B cell (primary cell): ENCODE measurements at regions of chr19 and their contacts with region 1.

Region 1: DNA sequence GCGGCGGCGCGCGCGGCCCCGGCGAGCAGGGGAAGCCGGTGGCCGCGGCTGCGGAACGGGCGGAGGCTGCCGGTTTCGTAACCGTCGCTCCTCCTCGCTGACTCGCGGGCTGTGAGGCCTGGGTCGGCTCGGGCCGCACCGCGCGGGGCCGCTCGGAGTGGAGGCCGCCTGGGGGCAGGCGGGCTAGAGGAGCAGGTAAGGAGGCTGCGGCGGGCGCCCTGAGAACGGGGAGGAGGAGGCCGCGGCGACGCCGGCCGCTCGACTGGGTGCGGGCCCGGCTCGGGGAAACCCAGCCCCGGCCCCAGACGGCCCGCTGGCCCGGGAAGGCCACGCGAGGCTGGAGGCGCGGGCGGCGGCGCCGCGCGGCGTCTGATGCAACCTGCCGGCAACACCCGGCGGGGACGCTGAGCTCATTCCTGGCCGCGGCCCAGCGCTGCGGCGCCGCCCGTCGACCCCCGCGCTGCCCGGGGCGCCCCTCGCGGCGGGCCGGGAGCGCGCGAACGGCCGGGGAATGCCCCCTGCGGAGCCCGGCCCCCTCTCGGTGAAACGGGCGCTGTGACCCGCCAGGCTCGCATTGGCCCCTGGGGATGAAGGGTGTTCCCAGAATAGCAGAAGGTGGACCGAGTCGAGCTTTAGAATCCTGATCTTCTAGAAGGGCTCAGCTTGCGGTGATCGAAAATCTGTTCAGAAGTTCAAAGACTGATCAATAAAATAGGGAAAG is at the start of gene CEBPG:
- DNase-seq: no peak
- ATAC-seq: peak; percentile 32
- H3K4me3 ChIP-seq: peak within 1 kb of the TSS; percentile 69 to 91 (median 83)
- H3K4me3 Mint-ChIP-seq: peak within 1 kb of the TSS; percentile 89
- H3K27ac ChIP-seq: peak within 1 kb of the TSS; percentile 90 to 96
- H3K27ac Mint-ChIP-seq: peak within 1 kb of the TSS; percentile 95
- H3K4me1 ChIP-seq: peaks cover 20 to 24% of the 10 kb centered on the region in 2 donors
- H3K4me1 Mint-ChIP-seq: peaks cover 42% of the 10 kb centered on the region
- H3K27me3 ChIP-seq: no peaks in the 10 kb centered on the region
- H3K27me3 Mint-ChIP-seq: no peaks in the 10 kb centered on the region
- CTCF ChIP-seq: peak; percentile 22
- total RNA-seq, gene CEBPG: 23.4 and 24.2 TPM in 2 replicates

Region 2: DNA sequence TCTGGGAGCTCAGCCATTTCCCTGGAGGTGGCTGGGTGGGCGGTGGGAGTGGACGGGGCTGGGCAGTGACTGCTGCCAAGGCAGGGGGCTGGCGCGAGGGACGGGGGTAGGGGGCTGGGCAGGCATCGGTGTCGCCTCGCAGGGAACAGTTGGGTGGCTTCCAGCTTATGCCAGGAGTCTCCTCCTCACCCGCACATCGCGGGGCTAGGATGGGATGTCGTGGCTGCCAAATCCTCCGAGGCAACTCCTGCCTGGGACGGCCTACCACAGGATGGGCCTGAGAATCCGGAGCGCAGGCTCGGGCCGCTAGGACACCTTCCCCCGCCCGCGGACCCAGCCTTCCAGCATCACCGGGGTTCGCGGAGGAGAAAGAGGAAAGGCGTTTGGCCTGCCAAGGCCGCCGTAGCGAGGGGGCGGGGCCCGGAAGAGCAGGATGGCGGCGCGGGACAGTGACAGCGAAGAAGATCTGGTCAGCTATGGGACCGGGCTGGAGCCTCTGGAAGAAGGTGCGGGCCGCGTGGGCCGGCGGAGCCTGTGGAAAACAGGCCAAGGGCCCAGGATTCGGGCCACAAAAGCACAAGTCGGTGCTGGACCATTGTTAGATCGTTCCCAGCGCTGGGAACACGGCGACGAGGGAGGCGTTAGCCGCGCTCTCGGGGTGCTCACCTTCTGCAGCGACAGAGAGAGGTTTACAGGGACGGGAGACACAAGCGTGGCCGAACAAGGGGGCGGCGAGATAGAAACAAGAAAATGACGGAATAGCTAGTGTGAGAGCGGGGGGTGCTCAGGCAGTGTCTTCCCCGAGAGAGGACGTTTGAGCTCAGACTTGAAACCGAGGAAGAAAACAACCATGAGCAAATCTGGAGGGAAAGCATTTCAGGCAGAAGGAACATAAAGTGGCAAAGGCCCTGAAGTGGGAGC is 292.8 kb before region 1 on chr19 and contains the start of gene GPATCH1:
- CTCF ChIA-PET with region 1: no interaction called
- POLR2A ChIA-PET with region 1: no interaction called
- intact Hi-C with region 1: loop called (anchors 1 kb)
- DNase-seq: peak; percentile 89
- ATAC-seq: peak; percentile 97
- H3K4me3 ChIP-seq: peak within 1 kb of the TSS; percentile 75 to 98 (median 90)
- H3K4me3 Mint-ChIP-seq: peak within 1 kb of the TSS; percentile 93
- H3K27ac ChIP-seq: peak within 1 kb of the TSS; percentile 62 to 85
- H3K27ac Mint-ChIP-seq: peak within 1 kb of the TSS; percentile 93
- H3K4me1 ChIP-seq: peaks cover 9 to 15% of the 10 kb centered on the region in 2 donors
- H3K4me1 Mint-ChIP-seq: peaks cover 19% of the 10 kb centered on the region
- H3K27me3 ChIP-seq: no peaks in the 10 kb centered on the region
- H3K27me3 Mint-ChIP-seq: no peaks in the 10 kb centered on the region
- CTCF ChIP-seq: no peak
- total RNA-seq, gene GPATCH1: 14.6 and 16.9 TPM in 2 replicates

Region 3: DNA sequence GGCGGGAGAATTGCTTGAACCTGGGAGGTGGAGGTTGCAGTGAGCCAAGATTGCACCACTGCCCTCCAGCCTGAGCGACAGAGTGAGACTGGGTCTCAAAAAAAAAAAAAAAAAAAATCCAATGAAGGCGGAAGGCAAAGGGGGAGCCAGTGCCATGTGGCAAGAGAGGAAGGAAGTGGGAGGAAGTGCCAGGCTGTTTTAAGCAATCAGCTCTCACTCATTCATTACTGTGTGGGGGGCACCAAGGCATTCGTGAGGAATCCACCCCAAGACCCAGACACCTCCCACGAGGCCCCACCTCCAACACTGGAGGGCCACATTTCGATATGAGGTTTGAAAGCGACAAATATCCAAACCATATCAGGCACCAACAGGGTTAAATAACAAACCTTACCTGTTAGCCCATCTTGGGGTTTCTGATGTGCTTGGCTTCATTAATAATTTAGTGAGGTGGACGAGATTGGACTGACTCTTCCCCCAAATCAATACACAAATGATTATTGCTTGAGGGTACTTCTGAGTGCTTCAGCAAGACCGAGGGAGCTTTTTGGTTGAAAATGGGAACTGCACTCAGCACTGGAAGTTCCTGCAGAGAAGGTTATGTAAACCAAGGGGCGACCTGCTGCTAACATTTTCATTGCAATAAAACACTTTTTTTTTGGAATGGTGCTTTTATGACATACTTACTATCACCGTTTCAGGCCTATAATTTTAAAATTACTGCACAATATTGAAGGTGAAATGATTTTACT is 187.3 kb before region 1 on chr19:
- CTCF ChIA-PET with region 1: no interaction called
- POLR2A ChIA-PET with region 1: interaction called, 11 read pairs
- intact Hi-C with region 1: no loop called
- DNase-seq: no peak
- ATAC-seq: no peak
- H3K4me3 ChIP-seq: no peak overlapping the region
- H3K4me3 Mint-ChIP-seq: no peak overlapping the region
- H3K27ac ChIP-seq: no peak overlapping the region
- H3K27ac Mint-ChIP-seq: no peak overlapping the region
- H3K4me1 ChIP-seq: peaks cover 8 to 14% of the 10 kb centered on the region in 2 donors
- H3K4me1 Mint-ChIP-seq: peaks cover 9% of the 10 kb centered on the region
- H3K27me3 ChIP-seq: peaks cover 0 to 1% (median 0%) of the 10 kb centered on the region in 4 experiments
- H3K27me3 Mint-ChIP-seq: peaks cover 18% of the 10 kb centered on the region
- CTCF ChIP-seq: no peak

Region 4: DNA sequence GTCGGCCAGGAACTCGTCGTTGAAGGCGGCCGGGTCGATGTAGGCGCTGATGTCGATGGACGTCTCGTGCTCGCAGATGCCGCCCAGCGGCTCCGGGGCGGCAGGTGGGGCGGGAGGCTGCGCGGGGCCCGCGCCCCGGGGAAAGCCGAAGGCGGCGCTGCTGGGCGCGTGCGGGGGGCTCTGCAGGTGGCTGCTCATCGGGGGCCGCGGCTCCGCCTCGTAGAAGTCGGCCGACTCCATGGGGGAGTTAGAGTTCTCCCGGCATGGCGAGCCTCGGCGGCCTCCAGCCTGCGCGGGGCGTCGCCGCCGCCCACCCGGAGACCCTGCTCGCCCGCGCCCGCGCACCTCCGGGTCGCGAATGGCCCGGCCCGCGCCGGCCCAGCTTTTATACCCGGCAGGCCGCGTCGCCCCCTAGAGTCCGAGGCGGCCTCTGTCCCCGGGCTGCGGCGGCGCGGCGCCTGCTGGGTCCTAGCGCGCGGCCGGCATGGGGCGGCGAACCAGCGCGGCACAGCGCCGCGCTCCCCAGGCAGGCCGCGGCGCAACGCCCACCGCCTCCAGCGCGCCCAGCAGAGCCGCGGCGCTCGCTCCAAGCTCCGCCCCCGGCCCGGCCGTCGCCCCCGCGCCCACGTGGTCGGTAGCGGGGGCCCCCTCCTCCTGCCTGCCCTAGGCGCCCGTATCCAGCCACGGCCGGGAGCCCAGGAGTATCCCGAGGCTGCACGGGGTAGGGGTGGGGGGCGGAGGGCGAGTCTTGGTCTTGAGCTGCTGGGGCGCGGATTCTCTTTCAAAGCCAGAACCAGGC is 71.5 kb before region 1 on chr19 and contains the start of gene CEBPA:
- CTCF ChIA-PET with region 1: interaction called, 3 read pairs
- POLR2A ChIA-PET with region 1: no interaction called
- intact Hi-C with region 1: loop called (anchors 2 kb)
- DNase-seq: peak; percentile 84
- ATAC-seq: peak; percentile 91
- H3K4me3 ChIP-seq: peak within 1 kb of the TSS; percentile 21 to 77 (median 58)
- H3K4me3 Mint-ChIP-seq: peak within 1 kb of the TSS; percentile 70
- H3K27ac ChIP-seq: no peak within 1 kb of the TSS
- H3K27ac Mint-ChIP-seq: no peak within 1 kb of the TSS
- H3K4me1 ChIP-seq: peaks cover 19 to 21% of the 10 kb centered on the region in 2 donors
- H3K4me1 Mint-ChIP-seq: peaks cover 10% of the 10 kb centered on the region
- H3K27me3 ChIP-seq: peaks cover 0 to 56% (median 28%) of the 10 kb centered on the region in 4 experiments
- H3K27me3 Mint-ChIP-seq: peaks cover 42% of the 10 kb centered on the region
- CTCF ChIP-seq: peak; percentile 45
- total RNA-seq, gene CEBPA: 1.7 and 2.5 TPM in 2 replicates

Region 5: GRCh38 chr19:33406521-33407139 is 32.8 kb after region 1 on chr19:
- CTCF ChIA-PET with region 1: interaction called, 6 read pairs
- POLR2A ChIA-PET with region 1: no interaction called
- intact Hi-C with region 1: loop called (anchors 2 kb)
- DNase-seq: peak; percentile 78
- ATAC-seq: peak; percentile 85
- H3K4me3 ChIP-seq: no peak overlapping the region
- H3K4me3 Mint-ChIP-seq: no peak overlapping the region
- H3K27ac ChIP-seq: no peak overlapping the region
- H3K27ac Mint-ChIP-seq: no peak overlapping the region
- H3K4me1 ChIP-seq: no peaks in the 10 kb centered on the region
- H3K4me1 Mint-ChIP-seq: no peaks in the 10 kb centered on the region
- H3K27me3 ChIP-seq: no peaks in the 10 kb centered on the region
- H3K27me3 Mint-ChIP-seq: no peaks in the 10 kb centered on the region
- CTCF ChIP-seq: peak; percentile 90

Region 6: DNA sequence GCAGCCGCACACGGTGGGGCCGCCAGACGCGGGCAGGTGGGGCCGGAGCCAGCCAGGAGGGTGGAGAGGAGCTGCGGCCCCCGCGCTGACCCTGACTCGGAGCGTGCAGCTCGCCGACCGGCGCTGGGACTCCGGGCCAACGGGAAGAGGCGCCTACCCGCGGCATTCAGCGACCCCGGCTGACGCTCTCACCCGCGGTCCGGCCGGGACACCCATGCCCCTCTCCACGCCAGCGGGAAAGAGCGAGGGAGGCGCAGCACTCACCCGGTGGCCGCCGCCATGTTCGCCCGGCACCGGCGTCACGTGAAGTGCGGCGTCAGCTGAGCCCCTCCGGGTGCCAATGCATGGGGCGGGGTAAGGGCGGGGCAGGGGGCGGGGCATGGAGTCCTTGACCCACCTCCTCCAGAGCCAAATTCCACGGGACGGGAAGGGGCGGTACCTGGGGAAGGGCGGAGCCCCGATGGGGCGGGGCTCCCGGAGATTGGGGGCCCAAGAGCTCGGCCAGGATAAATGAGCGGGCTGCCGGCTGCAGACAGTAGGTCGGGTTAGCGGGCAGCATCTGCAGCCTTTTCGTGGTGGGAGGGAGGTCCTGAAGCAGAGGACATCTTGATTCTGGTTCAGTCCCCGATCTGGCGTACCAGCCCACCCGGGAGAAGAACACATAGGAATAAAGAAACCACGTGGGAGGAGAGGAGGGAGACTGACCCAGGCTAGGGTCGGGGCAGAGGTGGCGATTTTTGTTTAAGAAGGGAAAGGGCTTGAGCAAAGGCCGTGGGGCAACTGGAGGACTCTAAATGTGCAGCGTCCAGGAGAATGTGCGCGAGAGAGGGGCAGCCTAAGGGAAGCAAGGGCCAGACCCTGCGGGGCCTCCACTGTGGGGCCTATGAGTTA is 147.9 kb after region 1 on chr19 and contains the start of gene PEPD:
- CTCF ChIA-PET with region 1: no interaction called
- POLR2A ChIA-PET with region 1: no interaction called
- intact Hi-C with region 1: loop called (anchors 2 kb)
- DNase-seq: peak; percentile 88
- ATAC-seq: peak; percentile 98
- H3K4me3 ChIP-seq: peak within 1 kb of the TSS; percentile 43 to 84 (median 72)
- H3K4me3 Mint-ChIP-seq: peak within 1 kb of the TSS; percentile 82
- H3K27ac ChIP-seq: peak within 1 kb of the TSS; percentile 6 to 75
- H3K27ac Mint-ChIP-seq: peak within 1 kb of the TSS; percentile 51
- H3K4me1 ChIP-seq: peaks cover 11 to 21% of the 10 kb centered on the region in 2 donors
- H3K4me1 Mint-ChIP-seq: peaks cover 18% of the 10 kb centered on the region
- H3K27me3 ChIP-seq: no peaks in the 10 kb centered on the region
- H3K27me3 Mint-ChIP-seq: no peaks in the 10 kb centered on the region
- CTCF ChIP-seq: no peak
- total RNA-seq, gene PEPD: 38.0 and 42.7 TPM in 2 replicates

Region 7: GRCh38 chr19:34269968-34270621 is 896.2 kb after region 1 on chr19:
- CTCF ChIA-PET with region 1: no interaction called
- POLR2A ChIA-PET with region 1: no interaction called
- intact Hi-C with region 1: loop called (anchors 5 kb)
- DNase-seq: peak; percentile 90
- ATAC-seq: peak; percentile 87
- H3K4me3 ChIP-seq: peak overlapping the region; percentile 21 to 51 (median 38)
- H3K4me3 Mint-ChIP-seq: peak overlapping the region; percentile 60
- H3K27ac ChIP-seq: peak overlapping the region; percentile 86 to 96
- H3K27ac Mint-ChIP-seq: peak overlapping the region; percentile 84
- H3K4me1 ChIP-seq: peaks cover 79 to 83% of the 10 kb centered on the region in 2 donors
- H3K4me1 Mint-ChIP-seq: peaks cover 76% of the 10 kb centered on the region
- H3K27me3 ChIP-seq: no peaks in the 10 kb centered on the region
- H3K27me3 Mint-ChIP-seq: no peaks in the 10 kb centered on the region
- CTCF ChIP-seq: no peak